ENCODE measurements at regions of chrX and their contacts with region 1.

Region 1: GRCh38 chrX:49002091-49002935 is at the start of gene GRIPAP1:
- DNase-seq: peak; percentile 82 to 94 (median 86)
- H3K4me3 ChIP-seq: peak within 1 kb of the TSS; percentile 79 to 86
- H3K4me3 Mint-ChIP-seq: peak within 1 kb of the TSS; percentile 91 to 99 (median 97)
- H3K27ac ChIP-seq: peak within 1 kb of the TSS; percentile 97
- H3K27ac Mint-ChIP-seq: peak within 1 kb of the TSS; percentile 93 to 99 (median 98)
- H3K4me1 ChIP-seq: peaks cover 27% of the 10 kb centered on the region
- H3K4me1 Mint-ChIP-seq: peaks cover 17 to 36% (median 27%) of the 10 kb centered on the region in 4 donors
- H3K27me3 ChIP-seq: no peaks in the 10 kb centered on the region
- H3K27me3 Mint-ChIP-seq: no peaks in the 10 kb centered on the region
- total RNA-seq, gene GRIPAP1: 99.6 to 111 TPM

Region 2: GRCh38 chrX:48891402-48892288 is 110.7 kb before region 1 on chrX:
- CTCF ChIA-PET with region 1: no interaction called
- POLR2A ChIA-PET with region 1: no interaction called
- intact Hi-C with region 1: no loop called
- DNase-seq: peak; percentile 76 to 85 (median 78)
- H3K4me3 ChIP-seq: peak overlapping the region in 1 of 2 donors; percentile 49
- H3K4me3 Mint-ChIP-seq: peak overlapping the region; percentile 75 to 97 (median 82)
- H3K27ac ChIP-seq: peak overlapping the region; percentile 52
- H3K27ac Mint-ChIP-seq: peak overlapping the region in 6 of 7 donors; percentile 37 to 90 (median 74)
- H3K4me1 ChIP-seq: peaks cover 15% of the 10 kb centered on the region
- H3K4me1 Mint-ChIP-seq: peaks cover 10 to 30% (median 21%) of the 10 kb centered on the region in 4 donors
- H3K27me3 ChIP-seq: no peaks in the 10 kb centered on the region
- H3K27me3 Mint-ChIP-seq: peaks cover 0 to 1% of the 10 kb centered on the region in 2 donors

Region 3: GRCh38 chrX:48972220-48973167 is 29.8 kb before region 1 on chrX:
- CTCF ChIA-PET with region 1: no interaction called
- POLR2A ChIA-PET with region 1: interaction called, 14 read pairs
- intact Hi-C with region 1: no loop called
- DNase-seq: peak in 3 of 5 donors; percentile 12 to 27 (median 23)
- H3K4me3 ChIP-seq: no peak overlapping the region
- H3K4me3 Mint-ChIP-seq: peak overlapping the region; percentile 25 to 71 (median 62)
- H3K27ac ChIP-seq: no peak overlapping the region
- H3K27ac Mint-ChIP-seq: peak overlapping the region in 6 of 7 donors; percentile 7 to 82 (median 42)
- H3K4me1 ChIP-seq: peaks cover 9% of the 10 kb centered on the region
- H3K4me1 Mint-ChIP-seq: peaks cover 7 to 23% (median 11%) of the 10 kb centered on the region in 4 donors
- H3K27me3 ChIP-seq: no peaks in the 10 kb centered on the region
- H3K27me3 Mint-ChIP-seq: no peaks in the 10 kb centered on the region

Region 4: GRCh38 chrX:49019599-49020249 is 17.4 kb after region 1 on chrX:
- CTCF ChIA-PET with region 1: no interaction called
- POLR2A ChIA-PET with region 1: no interaction called
- intact Hi-C with region 1: no loop called
- DNase-seq: no peak
- H3K4me3 ChIP-seq: no peak overlapping the region
- H3K4me3 Mint-ChIP-seq: no peak overlapping the region
- H3K27ac ChIP-seq: no peak overlapping the region
- H3K27ac Mint-ChIP-seq: no peak overlapping the region
- H3K4me1 ChIP-seq: no peaks in the 10 kb centered on the region
- H3K4me1 Mint-ChIP-seq: no peaks in the 10 kb centered on the region
- H3K27me3 ChIP-seq: no peaks in the 10 kb centered on the region
- H3K27me3 Mint-ChIP-seq: no peaks in the 10 kb centered on the region

Measured in CD4-positive, alpha-beta memory T cell (primary cell).